Aorta (tissue), 5 donors: ENCODE measurements at regions of chr19 and their contacts with region 1.

Region 1: GRCh38 chr19:43532962-43533545 is at the start of gene ZNF575:
- DNase-seq: peak; percentile 94 to 95
- ATAC-seq: peak; percentile 87
- H3K4me3 ChIP-seq: peak within 1 kb of the TSS; percentile 2 to 54
- H3K27ac ChIP-seq: peak within 1 kb of the TSS; percentile 23 to 41
- H3K4me1 ChIP-seq: no peaks in the 10 kb centered on the region
- H3K27me3 ChIP-seq: no peaks in the 10 kb centered on the region
- total RNA-seq, gene ZNF575: 1.7 to 4.6 TPM

Region 2: GRCh38 chr19:43425567-43426392 is 107.3 kb before region 1 on chr19:
- intact Hi-C with region 1: no loop called
- DNase-seq: no peak
- ATAC-seq: no peak
- H3K4me3 ChIP-seq: no peak overlapping the region
- H3K27ac ChIP-seq: no peak overlapping the region
- H3K4me1 ChIP-seq: no peaks in the 10 kb centered on the region
- H3K27me3 ChIP-seq: no peaks in the 10 kb centered on the region

Region 3: GRCh38 chr19:43575156-43575950 is 42.3 kb after region 1 on chr19 and contains the starts of genes PINLYP and XRCC1:
- intact Hi-C with region 1: no loop called
- DNase-seq: peak; percentile 99
- ATAC-seq: peak; percentile 99
- H3K4me3 ChIP-seq: peak within 1 kb of the TSS; percentile 62 to 86
- H3K27ac ChIP-seq: peak within 1 kb of the TSS in 1 of 2 donors; percentile 68
- H3K4me1 ChIP-seq: no peaks in the 10 kb centered on the region
- H3K27me3 ChIP-seq: no peaks in the 10 kb centered on the region
- total RNA-seq, gene PINLYP: 8.2 to 10.1 TPM
- total RNA-seq, gene XRCC1: 22.3 to 30.2 TPM

Region 4: GRCh38 chr19:43595999-43596841 is 63.2 kb after region 1 on chr19 and contains the starts of genes IRGQ and ZNF576:
- intact Hi-C with region 1: loop called (anchors 2 to 5 kb)
- DNase-seq: peak; percentile 100
- ATAC-seq: peak; percentile 97
- H3K4me3 ChIP-seq: peak within 1 kb of the TSS; percentile 45 to 74
- H3K27ac ChIP-seq: peak within 1 kb of the TSS; percentile 15 to 61
- H3K4me1 ChIP-seq: peaks cover 0 to 5% of the 10 kb centered on the region in 2 donors
- H3K27me3 ChIP-seq: no peaks in the 10 kb centered on the region
- total RNA-seq, gene IRGQ: 20.3 to 25.5 TPM
- total RNA-seq, gene ZNF576: 12.0 to 14.5 TPM

Region 5: GRCh38 chr19:43651758-43652545 is 118.9 kb after region 1 on chr19:
- intact Hi-C with region 1: loop called in 1 of 2 experiments (anchors 5 kb)
- DNase-seq: no peak
- ATAC-seq: peak; percentile 60
- H3K4me3 ChIP-seq: no peak overlapping the region
- H3K27ac ChIP-seq: no peak overlapping the region
- H3K4me1 ChIP-seq: no peaks in the 10 kb centered on the region
- H3K27me3 ChIP-seq: no peaks in the 10 kb centered on the region

Region 6: DNA sequence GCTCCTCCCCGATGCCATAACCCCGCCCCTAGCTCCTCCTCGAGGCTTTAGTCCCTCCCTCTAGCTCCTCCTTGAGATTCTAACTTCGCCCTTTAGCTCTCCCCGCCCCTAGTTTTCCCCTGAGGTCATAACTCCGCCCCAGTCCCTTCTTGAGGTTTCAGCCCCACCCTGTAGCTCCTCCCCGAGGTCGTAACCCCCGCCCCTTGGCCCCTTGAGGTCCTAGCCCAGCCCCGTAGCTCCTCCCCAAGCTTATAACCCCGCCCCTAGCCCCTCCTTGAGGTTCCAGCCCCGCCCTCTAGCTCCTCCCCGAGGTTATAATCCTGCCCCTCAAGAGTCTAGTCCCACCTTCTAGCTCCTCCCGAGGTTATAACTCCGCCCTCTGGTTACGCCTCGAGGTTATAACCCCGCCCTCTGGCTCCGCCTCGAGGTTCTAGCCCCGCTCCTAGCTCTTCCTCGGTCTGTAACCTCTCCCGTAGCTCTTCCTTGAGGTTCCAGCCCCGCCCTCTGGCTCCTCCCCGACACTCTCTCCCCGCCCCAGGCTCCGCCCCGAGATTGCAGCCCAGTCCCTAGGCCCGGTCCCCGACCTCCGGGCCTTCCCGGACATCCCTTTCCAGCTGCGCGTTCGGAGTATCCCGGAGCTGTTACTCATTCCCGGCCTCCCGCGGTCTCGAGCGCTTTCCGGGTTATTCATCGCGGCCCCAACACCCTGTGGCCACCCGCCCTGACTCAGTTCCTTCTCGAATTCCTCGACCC is 135.5 kb after region 1 on chr19:
- intact Hi-C with region 1: loop called (anchors 5 to 10 kb)
- DNase-seq: peak; percentile 99 to 100
- ATAC-seq: peak; percentile 96
- H3K4me3 ChIP-seq: peak overlapping the region; percentile 11 to 81
- H3K27ac ChIP-seq: peak overlapping the region in 1 of 2 donors; percentile 60
- H3K4me1 ChIP-seq: peaks cover 0 to 1% of the 10 kb centered on the region in 2 donors
- H3K27me3 ChIP-seq: no peaks in the 10 kb centered on the region